MCF 10A (cell line): ENCODE measurements at regions of chr11 and their contacts with region 1.

Region 1: GRCh38 chr11:10808553-10809372 is at the start of gene EIF4G2:
- DNase-seq: peak; percentile 98
- H3K4me3 Mint-ChIP-seq: peak within 1 kb of the TSS; percentile 89
- H3K27ac Mint-ChIP-seq: peak within 1 kb of the TSS; percentile 97
- H3K4me1 Mint-ChIP-seq: peaks cover 4% of the 10 kb centered on the region
- H3K27me3 Mint-ChIP-seq: no peaks in the 10 kb centered on the region
- CTCF ChIP-seq: no peak
- total RNA-seq, gene EIF4G2: 573 and 817 TPM in 2 replicates

Region 2: GRCh38 chr11:10770626-10771254 is 38.0 kb before region 1 on chr11:
- CTCF ChIA-PET with region 1: interaction called, 10 read pairs
- POLR2A ChIA-PET with region 1: interaction called, 24 read pairs
- intact Hi-C with region 1: no loop called
- DNase-seq: peak; percentile 58
- H3K4me3 Mint-ChIP-seq: no peak overlapping the region
- H3K27ac Mint-ChIP-seq: no peak overlapping the region
- H3K4me1 Mint-ChIP-seq: no peaks in the 10 kb centered on the region
- H3K27me3 Mint-ChIP-seq: no peaks in the 10 kb centered on the region
- CTCF ChIP-seq: peak; percentile 53

Region 3: DNA sequence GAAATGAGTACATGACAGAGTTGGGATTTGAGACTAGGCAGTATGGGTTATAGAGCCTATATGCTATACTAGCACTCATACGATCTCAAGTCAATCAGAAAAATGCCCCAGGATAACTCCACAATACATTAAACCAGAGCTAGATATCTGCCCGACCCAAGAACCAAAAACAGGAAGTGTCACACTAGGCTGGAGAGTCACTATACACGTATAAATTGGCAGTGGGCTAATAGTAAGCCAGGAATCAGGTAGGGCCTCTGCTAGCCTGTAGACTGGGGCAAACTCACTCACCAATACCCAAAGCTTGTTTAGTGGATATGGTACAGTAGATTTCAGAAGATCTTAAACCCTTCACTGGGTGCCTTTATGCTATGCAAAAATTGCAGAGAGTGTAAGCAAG is 16.1 kb after region 1 on chr11:
- CTCF ChIA-PET with region 1: no interaction called
- POLR2A ChIA-PET with region 1: interaction called, 21 read pairs
- intact Hi-C with region 1: no loop called
- DNase-seq: no peak
- H3K4me3 Mint-ChIP-seq: no peak overlapping the region
- H3K27ac Mint-ChIP-seq: no peak overlapping the region
- H3K4me1 Mint-ChIP-seq: no peaks in the 10 kb centered on the region
- H3K27me3 Mint-ChIP-seq: no peaks in the 10 kb centered on the region
- CTCF ChIP-seq: no peak

Region 4: DNA sequence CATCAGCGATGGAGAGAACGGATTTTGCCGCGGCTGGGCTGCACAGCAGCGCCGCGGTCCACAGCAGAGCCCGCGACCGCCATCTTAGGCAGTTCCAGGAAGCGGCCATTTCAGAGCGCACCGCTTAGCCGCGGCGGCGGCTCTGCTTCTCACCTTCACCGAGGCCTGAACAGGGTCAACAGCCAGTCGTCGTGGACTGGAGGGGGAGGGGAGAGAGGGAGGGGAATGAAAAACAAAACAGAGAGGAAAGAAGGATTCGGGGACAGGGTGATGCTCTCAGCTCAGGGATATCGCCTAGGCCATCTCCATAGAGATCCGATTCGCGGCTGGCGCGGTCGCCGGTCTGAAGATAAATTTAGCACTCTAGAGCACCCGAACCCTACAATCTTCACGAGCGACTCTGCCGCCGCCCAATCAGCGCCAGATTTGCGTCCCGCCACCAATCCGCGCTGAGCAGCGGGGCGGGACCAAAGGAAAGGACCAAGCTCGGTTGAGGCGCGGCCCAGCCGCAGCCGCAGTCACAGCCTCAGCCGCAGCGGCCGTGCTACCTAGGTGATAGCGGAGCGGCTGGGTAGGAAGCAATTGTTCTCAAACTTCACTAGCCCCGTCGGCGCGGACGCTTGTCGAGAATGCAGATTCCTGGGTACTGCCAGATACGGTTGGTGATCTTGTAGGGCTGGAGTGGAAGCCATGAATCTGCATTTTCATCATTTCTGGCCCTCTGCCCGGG is 49.1 kb after region 1 on chr11 and contains the start of gene ZBED5:
- CTCF ChIA-PET with region 1: interaction called, 4 read pairs
- POLR2A ChIA-PET with region 1: interaction called, 301 read pairs
- intact Hi-C with region 1: loop called (anchors 1 kb)
- DNase-seq: peak; percentile 97
- H3K4me3 Mint-ChIP-seq: peak within 1 kb of the TSS; percentile 87
- H3K27ac Mint-ChIP-seq: peak within 1 kb of the TSS; percentile 97
- H3K4me1 Mint-ChIP-seq: peaks cover 6% of the 10 kb centered on the region
- H3K27me3 Mint-ChIP-seq: no peaks in the 10 kb centered on the region
- CTCF ChIP-seq: no peak
- total RNA-seq, gene ZBED5: 38.9 and 53.3 TPM in 2 replicates

Region 5: GRCh38 chr11:10899121-10899830 is 90.5 kb after region 1 on chr11:
- CTCF ChIA-PET with region 1: interaction called, 7 read pairs
- POLR2A ChIA-PET with region 1: interaction called, 147 read pairs
- intact Hi-C with region 1: loop called (anchors 1 kb)
- DNase-seq: peak; percentile 96
- H3K4me3 Mint-ChIP-seq: peak overlapping the region; percentile 58
- H3K27ac Mint-ChIP-seq: peak overlapping the region; percentile 98
- H3K4me1 Mint-ChIP-seq: peaks cover 62% of the 10 kb centered on the region
- H3K27me3 Mint-ChIP-seq: no peaks in the 10 kb centered on the region
- CTCF ChIP-seq: no peak

Region 6: DNA sequence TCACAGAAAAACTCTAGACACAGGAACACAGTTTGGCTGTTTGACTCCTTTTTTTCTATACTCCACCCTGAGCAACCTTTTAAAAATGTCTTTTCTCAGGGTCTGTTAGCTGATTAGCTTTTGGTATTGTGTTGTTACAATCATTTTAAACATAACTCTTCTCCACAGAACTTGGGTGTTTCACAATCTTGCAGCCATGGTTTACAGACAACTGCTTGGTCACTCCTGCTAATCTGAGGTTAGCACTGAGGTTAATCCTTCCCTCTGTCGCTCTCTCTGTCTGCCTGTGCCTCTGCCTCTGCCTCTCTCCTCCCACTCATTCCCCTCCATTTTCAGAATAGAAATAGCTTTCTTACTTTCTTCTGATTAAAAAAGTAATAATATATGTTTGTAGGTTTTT is 111.4 kb after region 1 on chr11:
- CTCF ChIA-PET with region 1: interaction called, 3 read pairs
- POLR2A ChIA-PET with region 1: interaction called, 34 read pairs
- intact Hi-C with region 1: no loop called
- DNase-seq: no peak
- H3K4me3 Mint-ChIP-seq: no peak overlapping the region
- H3K27ac Mint-ChIP-seq: no peak overlapping the region
- H3K4me1 Mint-ChIP-seq: peaks cover 5% of the 10 kb centered on the region
- H3K27me3 Mint-ChIP-seq: no peaks in the 10 kb centered on the region
- CTCF ChIP-seq: no peak

Region 7: GRCh38 chr11:11044137-11044855 is 235.5 kb after region 1 on chr11:
- CTCF ChIA-PET with region 1: no interaction called
- POLR2A ChIA-PET with region 1: no interaction called
- intact Hi-C with region 1: no loop called
- DNase-seq: no peak
- H3K4me3 Mint-ChIP-seq: no peak overlapping the region
- H3K27ac Mint-ChIP-seq: no peak overlapping the region
- H3K4me1 Mint-ChIP-seq: peaks cover 5% of the 10 kb centered on the region
- H3K27me3 Mint-ChIP-seq: no peaks in the 10 kb centered on the region
- CTCF ChIP-seq: no peak

Region 8: DNA sequence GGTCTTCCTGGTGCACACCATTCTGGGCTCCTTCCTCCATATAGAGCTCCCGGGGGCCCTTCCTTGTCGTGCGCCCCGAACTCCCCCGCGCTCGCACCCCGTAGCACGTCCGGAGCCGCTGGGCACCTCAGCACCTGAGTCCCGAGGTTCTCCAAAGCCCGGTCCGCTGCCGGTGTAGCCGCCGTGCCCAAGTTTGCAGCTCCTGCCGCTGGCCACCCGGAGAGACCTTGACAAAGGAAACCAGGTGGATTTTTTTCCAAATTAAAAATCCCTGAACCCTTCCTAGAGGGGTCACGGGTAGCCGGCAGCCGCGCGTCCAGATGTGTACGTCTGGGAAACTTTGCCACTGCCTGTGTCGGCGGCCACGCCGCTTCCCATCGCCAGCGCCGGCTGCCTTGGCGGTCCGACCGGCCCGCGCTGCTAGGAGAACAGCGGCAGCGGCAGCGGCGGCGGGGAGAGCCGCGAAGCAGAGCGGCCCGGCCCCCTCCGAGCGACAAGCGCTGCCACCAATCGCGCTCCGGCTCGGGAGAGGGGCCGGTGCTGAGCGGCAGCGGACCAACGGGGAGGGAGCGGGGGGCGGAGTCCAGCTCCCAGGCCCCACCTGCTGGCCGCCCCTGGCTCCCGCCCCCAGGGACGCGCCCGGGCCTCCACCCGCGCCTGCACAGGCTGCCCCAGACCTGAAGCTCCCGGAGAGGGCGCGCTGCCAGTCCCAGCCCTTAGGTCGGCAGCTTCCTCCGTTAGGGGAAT is 813.0 kb after region 1 on chr11 and contains the start of gene GALNT18:
- CTCF ChIA-PET with region 1: no interaction called
- POLR2A ChIA-PET with region 1: interaction called, 14 read pairs
- intact Hi-C with region 1: no loop called
- DNase-seq: peak; percentile 95
- H3K4me3 Mint-ChIP-seq: peak within 1 kb of the TSS; percentile 90
- H3K27ac Mint-ChIP-seq: peak within 1 kb of the TSS; percentile 51
- H3K4me1 Mint-ChIP-seq: peaks cover 34% of the 10 kb centered on the region
- H3K27me3 Mint-ChIP-seq: no peaks in the 10 kb centered on the region
- CTCF ChIP-seq: peak; percentile 29
- total RNA-seq, gene GALNT18: 9.0 and 14.1 TPM in 2 replicates